AG04450 (cell line): ENCODE measurements at regions of chr11 and their contacts with region 1.

Region 1: DNA sequence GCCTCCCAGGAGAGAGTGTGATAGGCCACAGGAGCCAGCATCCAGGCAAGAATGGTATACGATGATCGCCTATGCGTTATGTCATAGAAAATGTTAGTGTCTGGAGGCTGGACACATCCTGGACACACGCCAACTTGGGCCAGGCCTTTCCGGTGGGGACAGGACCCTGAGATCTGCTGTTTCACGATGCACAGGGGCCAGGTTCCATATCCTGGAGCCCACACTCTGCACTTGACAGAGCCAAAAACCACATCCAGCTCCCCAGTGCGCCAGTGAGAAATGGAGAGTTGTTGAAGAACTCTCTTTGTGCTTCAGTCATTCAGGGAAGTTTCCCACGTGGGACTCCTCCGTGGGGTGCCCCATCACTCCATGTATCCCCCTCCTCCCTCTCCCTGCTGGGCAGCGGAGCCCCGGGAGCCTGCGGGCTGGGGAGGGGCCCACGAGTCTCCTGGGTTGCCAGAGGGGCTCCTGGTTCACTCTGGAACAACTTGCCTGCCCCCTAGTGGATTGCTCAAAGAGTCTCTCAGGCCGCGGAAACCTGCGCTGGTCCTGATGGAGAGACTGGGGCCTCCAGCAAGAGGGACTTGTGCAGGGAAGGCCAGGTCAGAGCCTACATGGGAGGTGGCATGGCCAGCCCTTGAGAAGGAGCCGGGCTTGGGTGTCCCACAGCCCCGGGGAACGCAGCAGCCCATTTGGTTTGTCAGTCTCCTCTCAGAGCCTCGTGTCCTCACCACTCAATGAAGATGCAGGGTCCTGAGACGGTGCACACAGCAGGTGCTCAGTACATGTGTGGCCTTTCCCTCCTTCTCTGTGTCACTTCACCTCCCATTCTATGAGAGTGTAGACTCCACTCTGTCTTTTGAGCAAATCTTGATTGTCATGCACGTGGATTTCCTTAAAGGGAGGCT is 10.2 kb upstream of the LRRC32 start:
- DNase-seq: no peak
- H3K4me3 ChIP-seq: no peak overlapping the region
- H3K27ac ChIP-seq: no peak overlapping the region
- H3K27me3 ChIP-seq: peaks cover 20% of the 10 kb centered on the region
- CTCF ChIP-seq: peak; percentile 86

Region 2: GRCh38 chr11:76598426-76598839 is 82.3 kb before region 1 on chr11:
- CTCF ChIA-PET with region 1: interaction called, 36 read pairs
- POLR2A ChIA-PET with region 1: interaction called, 3 read pairs
- DNase-seq: no peak
- H3K4me3 ChIP-seq: no peak overlapping the region
- H3K27ac ChIP-seq: no peak overlapping the region
- H3K27me3 ChIP-seq: no peaks in the 10 kb centered on the region
- CTCF ChIP-seq: peak; percentile 62

Region 3: GRCh38 chr11:77101052-77101537 is 420.3 kb after region 1 on chr11:
- CTCF ChIA-PET with region 1: no interaction called
- POLR2A ChIA-PET with region 1: no interaction called
- DNase-seq: no peak
- H3K4me3 ChIP-seq: no peak overlapping the region
- H3K27ac ChIP-seq: no peak overlapping the region
- H3K27me3 ChIP-seq: no peaks in the 10 kb centered on the region
- CTCF ChIP-seq: peak; percentile 58